MCF 10A (cell line): ENCODE measurements at regions of chr1 and their contacts with region 1.

Region 1: GRCh38 chr1:21963477-21964217 is 13.2 kb upstream of the CELA3B start:
- DNase-seq: peak; percentile 88
- H3K4me3 Mint-ChIP-seq: no peak overlapping the region
- H3K27ac Mint-ChIP-seq: peak overlapping the region; percentile 4
- H3K4me1 Mint-ChIP-seq: peaks cover 7% of the 10 kb centered on the region
- H3K27me3 Mint-ChIP-seq: no peaks in the 10 kb centered on the region
- CTCF ChIP-seq: peak; percentile 91

Region 2: DNA sequence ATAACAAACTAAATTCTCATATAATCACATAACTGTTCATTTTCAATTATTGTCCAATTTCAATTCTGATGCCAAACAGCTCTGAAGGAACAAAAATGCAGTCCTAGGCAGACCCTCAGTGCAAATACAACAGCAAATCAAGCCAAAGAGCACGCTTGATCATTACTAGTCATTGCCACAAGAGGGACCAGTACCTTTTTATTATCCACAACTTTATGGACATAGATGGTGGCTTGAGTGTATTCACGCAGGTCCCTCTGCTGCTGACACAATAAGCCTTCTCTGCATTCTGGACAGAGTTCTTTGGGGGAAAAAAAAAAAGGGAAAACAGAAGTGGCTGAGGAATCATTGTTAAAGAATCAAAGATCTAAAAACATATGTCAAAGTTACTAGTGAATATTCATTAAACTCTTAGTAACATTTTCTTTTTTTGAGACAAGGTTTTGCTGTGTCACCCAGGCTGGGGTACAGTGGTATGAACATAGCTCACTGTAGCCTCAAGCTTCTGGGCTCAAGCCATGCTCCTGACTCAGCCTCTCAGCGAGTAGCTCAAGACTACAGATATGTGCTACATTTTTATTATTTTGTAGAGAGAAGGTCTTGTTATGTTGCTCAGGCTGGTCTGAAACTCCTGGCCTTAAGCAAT is 260.2 kb before region 1 on chr1:
- CTCF ChIA-PET with region 1: interaction called, 4 read pairs
- POLR2A ChIA-PET with region 1: no interaction called
- intact Hi-C with region 1: loop called (anchors 1 kb)
- DNase-seq: peak; percentile 50
- H3K4me3 Mint-ChIP-seq: no peak overlapping the region
- H3K27ac Mint-ChIP-seq: peak overlapping the region; percentile 15
- H3K4me1 Mint-ChIP-seq: no peaks in the 10 kb centered on the region
- H3K27me3 Mint-ChIP-seq: no peaks in the 10 kb centered on the region
- CTCF ChIP-seq: peak; percentile 44